ENCODE measurements at regions of chr12 and their contacts with region 1.

Region 1: DNA sequence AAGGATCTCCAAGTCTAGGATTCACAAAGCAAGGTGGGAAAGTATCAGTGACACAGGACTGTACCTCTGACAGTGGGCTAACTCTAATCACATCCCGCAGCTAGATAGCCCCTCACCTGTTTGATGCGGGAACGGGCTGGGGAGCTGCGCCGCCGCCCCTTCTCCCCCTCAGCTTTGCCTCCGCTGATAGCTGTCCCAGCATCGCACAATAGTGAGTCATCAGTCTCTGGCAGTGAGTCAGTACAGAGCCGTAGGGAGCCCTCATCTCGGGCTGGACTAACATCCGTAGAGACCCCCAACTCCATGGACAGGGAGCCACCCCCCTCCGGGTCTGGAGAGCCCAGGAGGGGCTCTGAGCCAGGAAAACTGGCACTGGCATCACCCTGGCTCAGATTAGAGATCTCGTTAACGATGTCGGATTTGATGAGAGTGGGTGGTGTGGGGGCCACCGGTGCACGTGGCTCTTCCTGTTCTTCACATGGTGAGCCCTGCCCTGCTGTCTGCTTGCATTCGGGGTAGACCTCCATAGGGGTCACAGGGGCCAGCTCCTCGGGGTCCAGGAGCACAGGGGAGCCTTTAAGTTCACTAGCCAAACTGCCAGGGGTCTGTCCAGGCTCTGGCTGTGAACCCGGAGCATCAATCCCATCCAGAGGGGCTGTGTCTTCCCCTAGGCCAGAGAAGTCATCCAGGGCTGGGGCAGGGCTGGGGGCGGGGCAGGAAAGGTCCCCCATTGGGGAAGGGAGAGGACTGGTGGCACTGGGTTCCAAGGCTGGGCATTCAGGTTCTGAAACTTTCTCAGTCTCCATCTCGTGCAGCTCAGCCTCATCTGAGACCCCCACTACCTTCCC is 10.8 kb downstream of the KMT2D start:
- DNase-seq: no peak
- ATAC-seq: no peak; the same call in 2 of the 3 replicates
- H3K4me3 ChIP-seq: no peak overlapping the region
- H3K27ac ChIP-seq: no peak overlapping the region; the same call in 2 of the 3 replicates
- H3K4me1 ChIP-seq: 0 out of 5 replicates have a peak, but pooled peaks cover 0 to 4% of the 10 kb centered on the region in 2 experiments
- H3K27me3 ChIP-seq: no peaks in the 10 kb centered on the region
- CTCF ChIP-seq: no peak
- EP300 ChIP-seq: no peak
- POLR2A ChIP-seq: peak; percentile 36; the same call in 1 of the 2 replicates
- RAD21 ChIP-seq: no peak

Region 2: DNA sequence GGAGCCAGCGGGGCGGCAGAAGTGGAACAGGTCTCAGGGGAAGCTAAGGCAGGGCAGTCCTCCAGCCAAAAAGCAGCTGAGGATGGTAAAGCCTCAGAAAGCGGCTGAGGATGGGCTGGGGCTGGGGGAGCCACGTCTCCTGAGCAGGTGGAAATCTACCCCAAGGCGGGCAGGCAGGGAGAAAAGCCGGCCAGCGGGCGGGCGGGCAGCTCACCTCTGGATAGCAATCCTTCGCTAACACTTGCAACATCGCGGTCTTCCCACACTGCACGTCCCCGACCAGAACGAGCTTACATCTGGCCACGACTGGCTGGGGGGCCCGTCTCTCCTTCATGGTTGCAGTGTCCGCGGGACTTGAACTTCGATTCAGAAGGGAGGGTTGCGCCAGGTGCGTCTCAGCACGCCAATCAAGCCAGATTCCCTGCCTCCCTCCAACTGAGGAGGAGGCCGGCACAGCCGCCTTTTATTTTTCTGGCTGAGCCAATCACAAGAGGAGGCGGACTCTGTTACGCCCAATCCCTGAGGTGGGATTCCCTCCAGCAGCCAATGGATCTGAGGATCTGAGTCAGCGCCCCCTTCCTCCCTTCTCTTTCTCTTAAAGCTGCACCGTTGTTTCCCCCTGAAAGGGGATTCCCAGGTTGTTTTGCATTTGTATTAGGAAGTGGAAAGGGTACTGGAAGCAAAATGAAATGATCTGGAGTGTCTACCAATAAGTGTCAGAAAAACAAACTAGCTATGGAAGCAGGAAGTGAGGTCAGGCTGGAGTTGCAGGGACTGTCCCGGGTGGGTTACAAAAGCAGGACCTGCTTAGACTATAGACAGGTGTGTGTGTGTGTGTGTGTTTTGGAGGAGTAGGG is 184.1 kb before region 1 on chr12 and contains the start of gene RND1:
- CTCF ChIA-PET with region 1: no interaction called
- POLR2A ChIA-PET with region 1: no interaction called
- in situ Hi-C with region 1: no loop called
- intact Hi-C with region 1: no loop called
- DNase-seq: peak; percentile 92 to 95 (median 94)
- ATAC-seq: peak; percentile 98
- H3K4me3 ChIP-seq: peak within 1 kb of the TSS; percentile 39
- H3K27ac ChIP-seq: peak within 1 kb of the TSS; percentile 37; the same call in 2 of the 3 replicates
- H3K4me1 ChIP-seq: peaks cover 7 to 8% of the 10 kb centered on the region in 2 experiments; a peak in 3 of 5 replicates
- H3K27me3 ChIP-seq: peaks cover 27 to 33% of the 10 kb centered on the region in 2 experiments
- CTCF ChIP-seq: peak in 1 of 3 experiments; percentile 19; a peak in 1 of 6 replicates
- EP300 ChIP-seq: no peak
- POLR2A ChIP-seq: peak; percentile 79
- RAD21 ChIP-seq: no peak
- polyA plus RNA-seq, gene RND1: not detected

Region 3: DNA sequence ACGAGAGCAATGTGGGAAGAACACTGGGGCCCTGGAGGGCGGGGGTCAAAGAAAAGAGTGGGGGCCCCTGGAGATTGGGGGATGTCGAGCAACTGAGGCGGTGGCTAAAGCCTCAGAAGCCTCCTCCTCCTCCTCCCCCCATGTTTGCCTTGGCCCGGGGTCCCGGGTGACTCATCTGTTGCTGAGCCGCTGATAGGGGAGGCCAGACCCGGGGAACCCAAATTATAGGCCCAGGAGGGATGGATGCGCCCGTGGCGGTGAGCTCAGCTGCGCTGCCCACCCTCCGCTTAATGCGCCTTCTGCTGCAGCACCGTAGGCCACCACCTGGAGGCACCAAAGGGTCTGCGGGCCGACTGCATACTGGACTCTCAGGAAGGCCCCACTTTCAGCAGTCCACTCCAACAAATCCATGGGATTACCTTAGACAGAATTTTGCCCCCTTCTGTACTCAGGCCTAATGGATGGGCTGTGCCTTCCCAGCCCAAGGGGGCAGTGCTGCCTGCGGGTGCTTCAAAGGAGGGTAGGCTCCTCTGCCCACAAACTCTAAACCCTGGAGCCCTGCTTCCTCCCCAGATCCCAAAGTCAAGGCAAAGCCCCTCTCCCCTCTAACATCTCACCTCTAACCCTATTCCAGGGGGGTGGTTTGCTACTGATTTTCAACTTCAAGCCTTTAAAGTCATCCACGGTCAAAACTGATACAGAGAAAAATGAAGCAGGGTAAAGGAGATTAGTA is 75.7 kb before region 1 on chr12:
- CTCF ChIA-PET with region 1: no interaction called
- POLR2A ChIA-PET with region 1: no interaction called
- in situ Hi-C with region 1: no loop called
- intact Hi-C with region 1: no loop called
- DNase-seq: peak; percentile 69 to 75 (median 72)
- ATAC-seq: peak; percentile 83
- H3K4me3 ChIP-seq: no peak overlapping the region
- H3K27ac ChIP-seq: no peak overlapping the region
- H3K4me1 ChIP-seq: peaks cover 14 to 61% of the 10 kb centered on the region in 2 experiments; a peak in 4 of 5 replicates
- H3K27me3 ChIP-seq: peaks cover 9 to 14% of the 10 kb centered on the region in 2 experiments; a peak in 4 of 5 replicates
- CTCF ChIP-seq: peak; percentile 78 to 85 (median 78)
- EP300 ChIP-seq: no peak
- POLR2A ChIP-seq: no peak
- RAD21 ChIP-seq: peak in 1 of 2 experiments; percentile 56; a peak in 2 of 4 replicates

Region 4: GRCh38 chr12:49037111-49037946 is 12.5 kb before region 1 on chr12:
- CTCF ChIA-PET with region 1: no interaction called
- POLR2A ChIA-PET with region 1: interaction called, 13 read pairs
- in situ Hi-C with region 1: no loop called
- intact Hi-C with region 1: no loop called
- DNase-seq: no peak
- ATAC-seq: no peak
- H3K4me3 ChIP-seq: no peak overlapping the region
- H3K27ac ChIP-seq: no peak overlapping the region
- H3K4me1 ChIP-seq: peaks cover 0 to 7% of the 10 kb centered on the region in 2 experiments; a peak in 1 of 5 replicates
- H3K27me3 ChIP-seq: no peaks in the 10 kb centered on the region
- CTCF ChIP-seq: no peak
- EP300 ChIP-seq: no peak
- POLR2A ChIP-seq: no peak; the same call in 1 of the 2 replicates
- RAD21 ChIP-seq: no peak